Gastrocnemius medialis (tissue), 4 donors: ENCODE measurements at regions of chr4 and their contacts with region 1.

Region 1: DNA sequence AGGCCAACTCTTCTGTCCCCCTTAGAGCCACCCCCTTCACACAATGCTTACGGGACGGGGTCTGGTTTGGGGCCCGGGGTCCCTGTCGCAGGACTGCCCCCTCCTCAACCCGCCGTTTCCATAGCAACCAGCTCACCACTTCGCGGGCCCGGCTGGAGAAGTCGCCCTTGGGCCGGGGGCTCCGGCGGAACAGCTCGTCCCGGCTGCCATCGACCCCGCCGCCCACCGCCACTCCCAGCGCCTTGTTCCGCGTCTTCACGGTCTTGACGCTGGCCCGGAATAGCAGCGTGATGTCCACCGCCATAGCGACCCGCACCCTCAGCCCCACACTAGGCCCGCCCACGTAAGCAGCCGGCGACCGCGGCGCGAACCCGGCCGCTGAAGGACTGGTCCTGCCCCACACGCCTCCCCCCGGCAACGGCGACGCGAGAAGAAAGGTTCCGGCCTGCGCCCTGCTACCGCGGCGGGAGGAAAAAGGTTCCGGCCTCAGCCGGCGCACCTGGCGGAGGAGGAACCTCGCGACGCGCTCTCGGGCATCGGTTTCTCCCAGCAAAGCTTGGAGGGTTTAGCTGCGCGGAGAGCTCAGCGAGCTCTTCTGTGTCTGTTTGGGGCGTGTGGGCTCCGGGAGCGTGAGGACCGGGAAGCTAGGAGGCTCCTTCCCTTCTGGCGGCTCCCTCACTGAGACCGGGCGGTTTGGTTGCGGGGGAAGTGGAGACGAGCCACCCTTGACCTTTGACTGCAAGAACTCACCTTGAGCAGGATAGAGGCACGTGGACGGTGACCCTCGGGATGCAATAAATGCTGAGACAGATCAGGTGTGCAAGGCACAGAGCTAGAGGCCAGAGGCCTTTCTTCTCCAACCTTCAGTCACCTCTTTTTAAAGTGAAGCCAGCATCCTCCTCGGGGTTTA is at the start of gene STX18:
- DNase-seq: peak; percentile 67 to 70
- ATAC-seq: peak; percentile 92 to 93
- H3K4me3 ChIP-seq: peak within 1 kb of the TSS; percentile 67 to 96 (median 90)
- H3K27ac ChIP-seq: peak within 1 kb of the TSS; percentile 78 to 92 (median 87)
- H3K4me1 ChIP-seq: peaks cover 25 to 30% of the 10 kb centered on the region in 2 donors
- H3K27me3 ChIP-seq: no peaks in the 10 kb centered on the region
- CTCF ChIP-seq: peak in 1 of 5 experiments; percentile 30
- POLR2A ChIP-seq: peak; percentile 68 to 73
- total RNA-seq, gene STX18: 19.2 to 27.4 (median 20.7) TPM

Region 2: GRCh38 chr4:4248029-4248884 is 293.7 kb before region 1 on chr4 and contains the start of gene TMEM128:
- in situ Hi-C with region 1: loop called in 1 of 4 experiments (anchors 25 kb)
- intact Hi-C with region 1: loop called (anchors 2 kb)
- DNase-seq: peak; percentile 83 to 87
- ATAC-seq: peak; percentile 98 to 99
- H3K4me3 ChIP-seq: peak within 1 kb of the TSS; percentile 79 to 88 (median 82)
- H3K27ac ChIP-seq: peak within 1 kb of the TSS; percentile 84 to 92 (median 88)
- H3K4me1 ChIP-seq: peaks cover 21 to 26% of the 10 kb centered on the region in 2 donors
- H3K27me3 ChIP-seq: no peaks in the 10 kb centered on the region
- CTCF ChIP-seq: peak in 4 of 5 experiments; percentile 22 to 31 (median 28)
- POLR2A ChIP-seq: peak; percentile 58 to 63
- total RNA-seq, gene TMEM128: 3.7 to 8.6 (median 4.6) TPM

Region 3: DNA sequence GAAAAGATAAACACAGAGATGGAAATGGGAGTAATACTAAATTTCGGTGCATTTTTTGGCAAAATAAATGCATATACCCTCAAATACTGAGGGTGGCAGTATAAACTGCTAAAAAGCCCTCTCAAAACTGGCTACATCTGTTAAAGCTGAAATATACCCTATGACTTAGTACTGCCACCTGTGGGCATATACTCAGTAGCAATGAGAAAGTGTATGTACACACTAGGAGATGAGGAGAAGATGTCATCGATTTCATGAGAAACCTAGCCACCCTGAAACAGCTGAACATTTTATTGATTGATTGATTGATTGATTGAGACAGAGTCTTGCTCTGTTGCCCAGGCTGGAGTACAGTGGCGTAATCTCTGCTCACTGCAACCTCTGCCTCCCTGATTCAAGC is 281.7 kb before region 1 on chr4:
- in situ Hi-C with region 1: loop called in 1 of 4 experiments (anchors 25 kb)
- intact Hi-C with region 1: no loop called
- DNase-seq: no peak
- ATAC-seq: peak in 1 of 2 donors; percentile 39
- H3K4me3 ChIP-seq: no peak overlapping the region
- H3K27ac ChIP-seq: no peak overlapping the region
- H3K4me1 ChIP-seq: no peaks in the 10 kb centered on the region
- H3K27me3 ChIP-seq: no peaks in the 10 kb centered on the region
- CTCF ChIP-seq: peak in 2 of 5 experiments; percentile 10 to 19
- POLR2A ChIP-seq: no peak

Region 4: DNA sequence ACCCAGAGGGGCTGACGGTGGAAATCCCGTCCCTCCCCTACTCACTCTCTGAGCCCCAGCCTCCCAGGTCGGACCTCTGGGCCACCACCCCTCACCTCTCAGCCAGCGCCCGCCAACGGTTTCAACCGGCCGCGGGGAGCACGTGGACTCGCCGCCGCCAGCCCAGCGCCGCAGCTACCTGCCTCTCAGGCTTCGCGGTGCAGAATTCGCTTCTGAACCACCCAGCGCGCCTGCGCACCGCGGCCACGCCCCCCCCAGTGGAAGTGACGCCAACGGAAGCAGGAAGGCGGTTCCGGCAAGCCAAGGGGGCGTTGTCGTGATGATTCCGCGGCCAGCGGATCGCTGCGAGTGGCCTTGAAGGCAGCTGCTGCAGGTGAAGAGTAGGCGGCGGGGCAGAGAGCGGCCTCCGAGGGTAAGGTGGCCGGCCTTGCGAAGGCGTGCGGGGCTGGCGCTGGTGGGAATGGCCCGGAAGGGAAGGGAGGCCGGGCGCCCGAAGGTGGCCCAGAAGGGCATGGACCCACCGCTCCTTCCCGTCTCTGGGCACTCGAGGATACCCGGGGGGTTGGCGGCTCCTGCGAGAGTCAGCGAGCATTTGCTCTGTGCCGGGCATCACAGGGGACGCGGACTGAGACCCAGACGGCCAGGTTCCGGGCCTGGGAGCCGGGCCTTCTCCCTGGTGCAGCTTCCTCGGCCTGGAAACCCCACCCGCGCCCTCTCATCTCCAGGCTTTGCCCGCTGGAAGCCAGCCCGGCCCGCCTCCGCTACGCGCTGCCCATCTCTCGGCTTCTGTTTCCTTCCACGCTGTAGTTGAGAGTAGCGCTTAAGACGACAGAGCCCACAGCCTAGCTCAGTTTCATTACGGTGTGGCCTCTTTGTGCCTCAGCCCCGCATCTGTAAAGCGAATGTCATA is 251.7 kb before region 1 on chr4 and contains the starts of genes LYAR and ZBTB49:
- in situ Hi-C with region 1: loop called in 1 of 4 experiments (anchors 25 kb)
- intact Hi-C with region 1: no loop called
- DNase-seq: peak; percentile 84 to 93
- ATAC-seq: peak; percentile 86 to 96
- H3K4me3 ChIP-seq: peak within 1 kb of the TSS; percentile 69 to 93 (median 82)
- H3K27ac ChIP-seq: peak within 1 kb of the TSS; percentile 84 to 88 (median 86)
- H3K4me1 ChIP-seq: peaks cover 42 to 62% of the 10 kb centered on the region in 2 donors
- H3K27me3 ChIP-seq: no peaks in the 10 kb centered on the region
- CTCF ChIP-seq: no peak
- POLR2A ChIP-seq: peak; percentile 80 to 83
- total RNA-seq, gene LYAR: 9.9 to 26.6 (median 23.1) TPM
- total RNA-seq, gene ZBTB49: 1.7 to 2.8 (median 2.5) TPM

Region 5: DNA sequence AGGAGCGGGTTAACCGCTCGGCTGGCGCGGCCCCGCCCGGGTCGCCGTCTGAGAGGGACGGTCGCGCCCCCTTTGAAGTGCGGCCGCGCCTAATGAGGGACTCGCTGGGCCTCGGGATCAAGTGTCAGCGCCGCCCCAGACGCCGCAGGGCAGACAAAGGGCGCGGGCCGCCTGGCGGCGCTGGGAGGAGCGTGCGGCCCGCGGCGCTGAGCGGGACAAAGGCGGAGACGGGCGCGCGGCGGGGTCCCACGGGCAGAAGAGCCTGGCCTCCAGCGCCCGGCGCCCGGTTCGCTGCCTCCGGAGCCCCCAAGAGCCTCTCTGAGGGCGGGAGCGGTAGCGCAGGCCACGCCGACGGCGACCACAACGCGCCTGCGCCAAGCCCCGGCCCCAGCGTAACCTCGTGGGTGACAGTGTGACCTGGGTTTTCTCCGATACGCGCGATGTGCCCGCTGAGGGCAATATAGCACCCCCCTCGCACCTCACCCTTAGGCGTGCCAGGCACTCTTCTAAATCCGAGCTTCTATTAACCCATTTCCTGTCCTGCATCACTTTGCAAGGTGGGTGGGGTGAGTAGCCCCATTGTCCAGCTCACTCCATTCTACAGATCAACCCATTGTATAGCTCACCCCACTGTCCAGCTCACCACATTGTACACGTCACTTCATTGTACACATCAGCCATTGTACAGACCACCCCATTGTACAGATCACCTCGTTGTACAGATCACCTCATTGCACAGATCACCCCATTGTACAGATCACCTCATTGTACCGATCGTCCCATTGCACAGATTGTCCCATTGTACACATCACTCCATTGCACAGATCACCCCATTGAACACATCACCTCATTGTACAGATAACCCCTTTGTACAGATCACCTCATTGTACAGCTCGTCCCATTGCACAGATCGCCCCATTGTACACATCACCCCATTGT is 33.6 kb after region 1 on chr4:
- in situ Hi-C with region 1: no loop called
- intact Hi-C with region 1: loop called (anchors 1 kb)
- DNase-seq: peak; percentile 12 to 18
- ATAC-seq: peak; percentile 74 to 76
- H3K4me3 ChIP-seq: peak overlapping the region; percentile 60 to 78 (median 64)
- H3K27ac ChIP-seq: peak overlapping the region; percentile 7 to 66 (median 9)
- H3K4me1 ChIP-seq: no peaks in the 10 kb centered on the region
- H3K27me3 ChIP-seq: no peaks in the 10 kb centered on the region
- CTCF ChIP-seq: peak in 4 of 5 experiments; percentile 27 to 67 (median 52)
- POLR2A ChIP-seq: no peak